Breast epithelium (tissue), 4 donors: ENCODE measurements at regions of chr16 and their contacts with region 1.

Region 1: DNA sequence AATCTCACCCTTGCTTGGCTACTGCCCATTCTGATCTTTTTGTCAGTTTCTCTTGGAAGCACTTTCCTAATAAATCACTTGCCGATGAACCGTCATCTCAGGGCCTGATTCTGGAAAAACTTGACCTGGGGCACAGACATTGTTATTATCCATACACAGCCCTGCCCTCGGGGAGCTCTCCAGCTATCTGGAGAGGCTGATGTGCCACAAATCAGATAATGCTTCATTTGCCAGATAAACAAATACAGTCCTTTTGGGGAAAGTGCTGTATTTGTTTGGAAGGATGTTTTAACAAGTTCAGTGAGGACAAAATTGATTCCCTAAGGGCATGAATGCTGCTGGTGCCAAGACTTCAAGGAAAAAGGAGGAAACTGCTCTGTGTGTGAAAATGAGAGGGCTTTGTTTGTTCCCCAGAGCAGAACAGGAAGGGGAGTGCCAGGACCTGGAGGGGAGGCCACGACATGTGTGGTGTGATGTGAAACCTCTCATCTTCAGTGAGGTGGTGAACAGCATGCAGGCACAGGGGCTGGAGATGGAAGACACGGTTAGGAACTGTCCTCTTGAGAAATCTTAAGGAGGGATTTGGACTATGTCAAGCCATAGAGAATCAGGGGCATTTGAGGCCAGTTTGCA is 46.4 kb upstream of the GRIN2A start:
- DNase-seq: no peak
- H3K4me3 ChIP-seq: no peak overlapping the region
- H3K27ac ChIP-seq: no peak overlapping the region
- H3K4me1 ChIP-seq: no peaks in the 10 kb centered on the region
- H3K27me3 ChIP-seq: no peaks in the 10 kb centered on the region
- CTCF ChIP-seq: no peak
- POLR2A ChIP-seq: no peak

Region 2: DNA sequence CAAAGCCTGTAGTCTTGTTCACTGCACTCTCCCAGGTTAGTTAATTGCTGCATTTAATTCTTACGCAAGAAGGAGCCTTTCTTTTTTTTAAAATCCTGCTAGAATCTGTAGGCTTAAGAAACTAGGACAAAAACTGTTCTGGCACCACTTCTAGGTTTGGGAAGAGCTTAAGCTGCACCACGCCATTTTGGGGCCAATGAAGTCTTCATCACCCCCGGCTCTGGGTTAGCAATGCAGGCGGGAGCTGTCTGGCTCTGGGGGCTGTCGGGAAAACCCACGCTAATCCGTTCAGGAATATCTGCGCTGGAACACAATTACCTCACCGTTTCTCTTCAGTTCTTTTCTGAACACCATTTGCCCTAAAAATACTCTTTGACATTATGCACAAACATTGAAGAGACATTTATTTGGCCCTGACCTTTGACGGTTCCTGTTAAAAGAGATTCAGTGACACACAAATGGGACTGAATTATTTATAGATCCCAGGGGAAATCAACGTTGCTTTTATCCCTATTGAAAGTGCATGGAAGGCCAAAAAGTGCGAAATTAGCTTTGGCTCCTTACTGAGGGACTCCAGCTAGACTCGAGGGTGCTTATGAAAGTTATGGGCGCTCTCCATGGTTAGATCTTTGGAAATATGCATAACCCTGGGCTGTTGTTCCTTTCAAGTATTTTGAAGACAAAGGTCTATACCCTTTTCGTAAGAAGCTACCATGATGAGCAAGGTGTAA is 888.0 kb before region 1 on chr16:
- intact Hi-C with region 1: loop called (anchors 5 kb)
- DNase-seq: no peak
- H3K4me3 ChIP-seq: no peak overlapping the region
- H3K27ac ChIP-seq: no peak overlapping the region
- H3K4me1 ChIP-seq: no peaks in the 10 kb centered on the region
- H3K27me3 ChIP-seq: no peaks in the 10 kb centered on the region
- CTCF ChIP-seq: no peak
- POLR2A ChIP-seq: no peak

Region 3: DNA sequence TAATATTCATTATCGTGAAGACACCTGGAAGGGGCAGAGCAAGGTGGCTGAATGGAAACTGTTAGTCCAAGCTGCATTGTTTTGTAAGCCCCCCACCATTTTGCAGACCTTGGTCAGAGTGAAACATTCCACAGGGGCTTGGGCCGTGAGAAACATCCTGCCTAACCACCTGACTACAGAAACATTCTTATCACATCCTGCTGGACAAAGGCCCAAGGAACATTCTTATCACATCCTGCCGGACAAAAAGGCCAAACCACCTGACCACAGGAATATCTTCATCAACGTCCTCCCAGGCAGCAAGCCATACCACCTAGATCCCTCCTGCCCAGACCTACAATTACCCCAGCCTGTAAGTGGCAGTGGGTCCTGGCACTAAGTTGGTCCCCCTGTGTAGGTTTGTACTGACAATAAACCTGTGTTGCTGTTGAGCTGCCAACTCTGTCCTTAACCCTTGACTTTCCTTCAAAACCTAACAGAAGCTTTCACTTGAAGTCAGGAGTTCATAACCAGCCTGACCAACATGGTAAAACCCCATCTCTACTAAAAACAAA is 176.8 kb after region 1 on chr16:
- intact Hi-C with region 1: no loop called
- DNase-seq: no peak
- H3K4me3 ChIP-seq: no peak overlapping the region
- H3K27ac ChIP-seq: no peak overlapping the region
- H3K4me1 ChIP-seq: no peaks in the 10 kb centered on the region
- H3K27me3 ChIP-seq: no peaks in the 10 kb centered on the region
- CTCF ChIP-seq: no peak
- POLR2A ChIP-seq: no peak